Right cardiac atrium (tissue), 5 donors: ENCODE measurements at regions of chrX and their contacts with region 1.

Region 1: DNA sequence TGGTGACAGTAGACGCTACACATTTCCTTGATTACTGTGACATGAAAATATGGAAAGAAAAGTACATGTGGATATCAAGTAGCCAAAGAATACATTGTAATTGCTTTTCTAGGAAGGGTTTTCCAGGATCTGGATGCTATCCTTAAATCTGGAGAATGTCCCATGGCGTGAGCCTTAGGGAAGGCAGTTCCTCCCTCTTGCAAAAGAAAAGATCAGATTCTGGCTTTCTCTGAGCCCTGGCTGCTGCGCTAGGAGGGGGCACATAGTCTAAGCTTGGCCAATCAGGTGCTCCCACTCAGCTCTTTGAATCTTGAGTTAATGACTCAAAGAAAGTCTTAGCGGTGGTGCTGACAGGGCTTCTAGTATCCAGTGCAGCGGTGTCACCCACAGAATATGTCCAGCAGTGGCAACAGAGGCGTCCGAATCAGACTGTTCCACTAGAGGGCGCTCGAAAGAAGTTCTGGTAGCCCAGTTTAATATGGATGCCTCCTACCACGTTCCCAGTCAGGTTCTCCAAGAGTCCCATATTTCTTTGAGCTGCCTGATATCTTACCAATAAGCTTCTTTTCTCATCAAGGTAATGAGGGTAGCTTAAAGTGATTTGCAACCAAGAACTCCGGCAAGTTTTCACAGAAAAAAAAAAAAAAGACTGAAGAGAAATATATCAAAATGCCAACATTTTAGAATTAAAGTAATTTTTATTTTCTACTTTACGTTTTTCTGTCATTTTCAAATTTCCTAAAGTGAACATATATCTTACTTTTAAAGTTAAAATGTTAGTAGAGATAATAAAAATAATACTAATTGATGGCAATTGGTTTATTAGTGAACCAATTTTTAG is 213.4 kb upstream of the S100G start:
- DNase-seq: peak; percentile 60 to 79 (median 77)
- ATAC-seq: peak; percentile 80 to 87
- H3K4me3 ChIP-seq: no peak overlapping the region
- H3K27ac ChIP-seq: no peak overlapping the region
- H3K4me1 ChIP-seq: no peaks in the 10 kb centered on the region
- H3K27me3 ChIP-seq: no peaks in the 10 kb centered on the region

Region 2: DNA sequence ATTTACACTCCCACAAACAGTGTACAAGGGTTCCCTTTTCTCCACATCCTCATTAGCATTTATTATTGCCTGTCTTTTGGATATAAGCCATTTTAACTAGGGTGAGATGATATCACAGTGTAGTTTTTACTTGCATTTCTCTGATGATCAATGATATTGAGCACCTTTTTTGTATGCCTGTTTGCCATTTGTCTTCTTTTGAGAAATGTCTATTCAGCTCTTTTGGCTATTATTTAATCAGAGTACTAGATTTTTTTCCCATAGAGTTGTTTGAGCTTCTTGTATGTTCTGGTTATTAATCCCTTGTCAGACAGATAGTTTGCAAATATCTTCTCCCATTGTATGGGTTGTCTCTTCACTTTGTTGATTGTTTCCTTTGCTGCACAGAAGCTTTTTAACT is 78.7 kb before region 1 on chrX:
- intact Hi-C with region 1: no loop called
- DNase-seq: no peak
- ATAC-seq: no peak
- H3K4me3 ChIP-seq: no peak overlapping the region
- H3K27ac ChIP-seq: no peak overlapping the region
- H3K4me1 ChIP-seq: no peaks in the 10 kb centered on the region
- H3K27me3 ChIP-seq: no peaks in the 10 kb centered on the region

Region 3: GRCh38 chrX:16670998-16671397 is 234.4 kb after region 1 on chrX:
- intact Hi-C with region 1: loop called in 3 of 4 experiments (anchors 5 to 10 kb)
- DNase-seq: no peak
- ATAC-seq: peak in 1 of 2 donors; percentile 45
- H3K4me3 ChIP-seq: no peak overlapping the region
- H3K27ac ChIP-seq: no peak overlapping the region
- H3K4me1 ChIP-seq: no peaks in the 10 kb centered on the region
- H3K27me3 ChIP-seq: no peaks in the 10 kb centered on the region